Spleen (tissue), 13 donors: ENCODE measurements at regions of chr9 and their contacts with region 1.

Region 1: GRCh38 chr9:34989003-34989945 is at the start of gene DNAJB5:
- DNase-seq: peak; percentile 97
- H3K4me3 ChIP-seq: peak within 1 kb of the TSS; percentile 68 to 92 (median 78)
- H3K27ac ChIP-seq: peak within 1 kb of the TSS; percentile 51 to 90 (median 86)
- H3K4me1 ChIP-seq: peaks cover 15 to 92% (median 56%) of the 10 kb centered on the region in 6 donors
- H3K27me3 ChIP-seq: peaks cover 0 to 8% (median 0%) of the 10 kb centered on the region in 7 donors
- CTCF ChIP-seq: peak in 3 of 11 experiments; percentile 14 to 36 (median 31)
- POLR2A ChIP-seq: peak in 1 of 3 donors; percentile 42
- total RNA-seq, gene DNAJB5: 5.6 to 14.4 (median 12.8) TPM

Region 2: GRCh38 chr9:35096035-35096849 is 107.0 kb after region 1 on chr9 and contains the start of gene PIGO:
- intact Hi-C with region 1: loop called (anchors 10 kb)
- DNase-seq: peak; percentile 99
- H3K4me3 ChIP-seq: peak within 1 kb of the TSS; percentile 60 to 91 (median 74)
- H3K27ac ChIP-seq: peak within 1 kb of the TSS; percentile 97 to 99 (median 98)
- H3K4me1 ChIP-seq: peaks cover 8 to 35% (median 17%) of the 10 kb centered on the region in 6 donors
- H3K27me3 ChIP-seq: no peaks in the 10 kb centered on the region
- CTCF ChIP-seq: peak; percentile 76 to 92 (median 83)
- POLR2A ChIP-seq: peak in 1 of 3 donors; percentile 58
- total RNA-seq, gene PIGO: 17.5 to 25.0 (median 21.0) TPM